ENCODE measurements at regions of chr11 and their contacts with region 1.

Region 1: DNA sequence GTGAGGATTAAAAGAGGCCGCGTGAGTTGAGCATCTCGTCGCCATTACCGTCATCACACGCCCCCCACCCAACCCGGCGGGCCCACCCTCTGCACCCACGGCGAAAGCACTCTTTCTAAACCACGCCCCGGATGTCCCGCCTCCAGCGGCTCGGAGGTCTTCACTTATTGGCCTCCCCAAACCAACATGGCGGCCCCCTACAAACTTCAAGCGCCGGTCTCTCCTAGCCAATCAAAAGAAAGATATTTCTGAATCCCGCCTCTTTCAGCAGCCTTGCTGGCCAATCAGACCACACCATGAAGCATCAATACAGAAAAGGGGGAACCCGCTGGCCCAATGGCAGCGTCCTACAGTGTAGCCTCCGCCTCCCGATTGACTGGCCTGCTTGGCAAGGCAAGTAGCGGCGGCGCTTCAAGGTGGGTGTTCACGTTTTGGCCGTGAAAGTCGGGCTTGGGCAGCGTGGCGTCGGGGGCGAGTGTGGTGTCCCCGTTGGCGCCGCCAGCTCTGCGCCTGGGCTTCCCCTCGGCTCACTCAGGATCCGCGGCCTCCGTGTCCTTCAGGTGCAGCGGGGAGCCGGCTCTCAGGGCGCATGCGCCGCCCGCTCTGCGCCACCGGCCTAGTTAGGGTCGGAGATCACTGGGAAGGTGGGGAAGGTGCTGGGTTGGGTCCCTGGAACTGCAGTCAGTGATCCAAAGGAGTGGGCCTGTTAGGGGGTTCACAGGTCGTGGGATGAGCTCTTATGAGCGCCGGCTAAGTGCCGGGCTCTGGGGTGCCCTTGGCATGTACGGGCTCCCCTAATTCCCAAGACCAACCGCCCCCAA is at the start of gene NDUFS8:
- DNase-seq: peak; percentile 96 to 99
- H3K4me3 ChIP-seq: peak within 1 kb of the TSS; percentile 91
- H3K27ac ChIP-seq: peak within 1 kb of the TSS; percentile 87
- H3K4me1 ChIP-seq: peaks cover 36% of the 10 kb centered on the region
- H3K27me3 ChIP-seq: no peaks in the 10 kb centered on the region
- CTCF ChIP-seq: no peak
- total RNA-seq, gene NDUFS8: 270 and 275 TPM in 2 replicates

Region 2: DNA sequence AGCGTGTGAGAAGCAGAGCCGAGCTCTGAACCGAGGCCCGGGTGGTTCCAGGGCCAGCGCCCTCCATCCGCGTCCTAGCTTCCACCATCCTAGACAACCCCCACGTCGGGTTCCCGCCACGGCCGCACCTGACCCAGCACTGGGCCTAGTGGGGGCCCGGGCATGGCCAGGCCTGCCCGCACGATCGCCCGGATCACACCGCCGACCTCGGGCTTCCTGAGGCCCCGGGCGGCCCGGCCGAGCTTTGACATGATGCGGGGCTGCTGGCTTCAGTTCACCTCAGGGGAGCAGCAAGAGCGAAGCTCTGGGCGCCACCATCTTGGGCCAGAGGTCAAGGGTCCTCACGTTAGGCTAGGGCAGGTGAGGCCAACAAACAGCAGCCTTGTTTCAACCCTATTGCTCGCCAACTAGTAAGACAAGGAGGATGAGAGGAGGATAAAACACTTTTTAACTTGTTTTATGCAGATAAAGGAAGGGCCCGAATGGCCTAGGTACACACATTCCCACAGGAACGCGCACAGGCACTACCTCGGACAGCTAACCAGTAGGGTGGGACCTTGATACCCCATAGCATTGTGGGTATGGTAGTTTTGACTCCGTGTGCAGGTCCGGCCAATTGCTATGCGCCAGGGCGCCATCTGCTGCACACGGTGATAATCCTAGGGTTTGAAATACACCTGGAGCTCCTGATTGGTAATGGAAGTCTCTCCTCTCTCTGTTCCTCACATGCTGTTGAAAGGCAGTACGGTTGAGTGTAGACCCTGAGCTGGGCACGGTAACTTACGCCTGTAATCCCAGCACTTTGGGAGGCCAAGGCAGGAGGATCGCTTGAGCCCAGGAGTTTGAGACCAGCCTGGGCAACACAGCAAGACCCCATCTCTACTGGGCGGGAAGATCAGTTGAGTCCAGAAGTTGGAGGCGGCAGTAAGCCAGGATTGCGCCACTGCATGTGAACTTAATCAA is 1591.7 kb before region 1 on chr11 and contains the start of gene MRPL11:
- CTCF ChIA-PET with region 1: no interaction called
- POLR2A ChIA-PET with region 1: interaction called, 24 read pairs
- intact Hi-C with region 1: no loop called
- DNase-seq: peak; percentile 91
- H3K4me3 ChIP-seq: peak within 1 kb of the TSS; percentile 71
- H3K27ac ChIP-seq: peak within 1 kb of the TSS; percentile 58
- H3K4me1 ChIP-seq: peaks cover 12% of the 10 kb centered on the region
- H3K27me3 ChIP-seq: no peaks in the 10 kb centered on the region
- CTCF ChIP-seq: peak; percentile 78
- total RNA-seq, gene MRPL11: 138 and 140 TPM in 2 replicates

Region 3: GRCh38 chr11:68051191-68052144 is 20.9 kb after region 1 on chr11:
- CTCF ChIA-PET with region 1: no interaction called
- POLR2A ChIA-PET with region 1: no interaction called
- intact Hi-C with region 1: no loop called
- DNase-seq: no peak
- H3K4me3 ChIP-seq: no peak overlapping the region
- H3K27ac ChIP-seq: no peak overlapping the region; the same call in 1 of the 2 replicates
- H3K4me1 ChIP-seq: no peaks in the 10 kb centered on the region
- H3K27me3 ChIP-seq: no peaks in the 10 kb centered on the region
- CTCF ChIP-seq: no peak